Activated CD4-positive, alpha-beta memory T cell treated with anti-CD3 and anti-CD28 coated beads for 36 hours (primary cell): ENCODE measurements at regions of chr15 and their contacts with region 1.

Region 1: GRCh38 chr15:43510200-43511011 is 7.0 kb upstream of the MAP1A start:
- DNase-seq: peak; percentile 98
- H3K4me3 Mint-ChIP-seq: peak overlapping the region; percentile 86
- H3K27ac Mint-ChIP-seq: peak overlapping the region; percentile 85
- H3K4me1 Mint-ChIP-seq: peaks cover 35% of the 10 kb centered on the region
- H3K27me3 Mint-ChIP-seq: no peaks in the 10 kb centered on the region

Region 2: DNA sequence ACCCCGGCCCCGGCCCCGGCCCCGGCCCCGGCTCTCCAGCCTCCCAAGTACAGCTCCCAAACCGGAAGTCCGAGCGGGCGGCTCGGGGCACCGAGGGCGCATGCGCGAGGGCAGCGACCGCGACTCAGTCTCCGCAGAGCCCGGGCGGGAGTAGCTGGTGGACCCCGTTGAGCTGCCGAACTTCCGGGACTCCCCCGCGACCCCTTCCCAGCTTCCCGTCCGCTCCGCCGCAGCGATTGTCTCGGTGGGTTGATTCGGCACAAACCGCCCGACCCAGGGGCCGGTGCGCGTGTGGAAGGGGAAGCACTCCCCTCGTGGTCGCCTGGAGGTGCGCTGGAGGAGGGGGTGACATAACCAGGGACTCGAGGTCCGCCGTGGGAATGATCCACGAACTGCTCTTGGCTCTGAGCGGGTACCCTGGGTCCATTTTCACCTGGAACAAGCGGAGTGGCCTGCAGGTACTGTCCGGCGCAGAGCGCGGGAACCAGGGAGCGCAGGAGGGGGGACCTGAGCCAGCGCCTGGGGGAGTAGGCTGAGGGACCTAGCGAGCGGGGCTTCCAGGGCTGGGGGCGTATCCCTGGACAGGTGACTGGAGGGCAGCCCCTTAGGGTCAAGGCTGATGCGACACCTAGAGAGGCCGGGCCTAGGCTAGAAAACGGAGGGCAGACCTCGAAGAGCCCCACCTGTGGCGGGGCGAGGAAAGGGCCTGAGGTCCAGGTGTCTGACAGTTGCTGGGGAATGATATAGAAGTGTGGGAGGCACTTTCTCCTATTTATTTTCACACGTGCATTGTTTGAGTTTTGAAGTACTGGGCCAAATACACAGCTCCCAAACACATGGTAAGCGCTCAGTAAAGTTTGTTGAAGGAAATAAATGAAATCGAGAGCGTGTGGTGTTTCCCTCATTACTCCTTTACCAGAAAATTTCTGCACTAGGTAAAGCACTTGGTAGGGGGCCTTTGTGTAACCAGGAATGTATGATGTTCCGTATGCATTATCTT is 139.1 kb before region 1 on chr15 and contains the starts of genes TUBGCP4 and ZSCAN29:
- CTCF ChIA-PET with region 1: interaction called, 9 read pairs
- POLR2A ChIA-PET with region 1: interaction called, 3 read pairs
- intact Hi-C with region 1: loop called (anchors 10 kb)
- DNase-seq: peak; percentile 86
- H3K4me3 Mint-ChIP-seq: peak within 1 kb of the TSS; percentile 90
- H3K27ac Mint-ChIP-seq: peak within 1 kb of the TSS; percentile 75
- H3K4me1 Mint-ChIP-seq: peaks cover 51% of the 10 kb centered on the region
- H3K27me3 Mint-ChIP-seq: no peaks in the 10 kb centered on the region
- total RNA-seq, gene TUBGCP4: 37.3 to 37.6 TPM
- total RNA-seq, gene ZSCAN29: 20.6 to 20.9 TPM

Region 3: GRCh38 chr15:43440721-43441281 is 69.6 kb before region 1 on chr15:
- CTCF ChIA-PET with region 1: interaction called, 54 read pairs
- POLR2A ChIA-PET with region 1: interaction called, 17 read pairs
- intact Hi-C with region 1: loop called (anchors 1 kb)
- DNase-seq: peak; percentile 61
- H3K4me3 Mint-ChIP-seq: peak overlapping the region; percentile 36
- H3K27ac Mint-ChIP-seq: peak overlapping the region; percentile 87
- H3K4me1 Mint-ChIP-seq: peaks cover 11% of the 10 kb centered on the region
- H3K27me3 Mint-ChIP-seq: no peaks in the 10 kb centered on the region

Region 4: DNA sequence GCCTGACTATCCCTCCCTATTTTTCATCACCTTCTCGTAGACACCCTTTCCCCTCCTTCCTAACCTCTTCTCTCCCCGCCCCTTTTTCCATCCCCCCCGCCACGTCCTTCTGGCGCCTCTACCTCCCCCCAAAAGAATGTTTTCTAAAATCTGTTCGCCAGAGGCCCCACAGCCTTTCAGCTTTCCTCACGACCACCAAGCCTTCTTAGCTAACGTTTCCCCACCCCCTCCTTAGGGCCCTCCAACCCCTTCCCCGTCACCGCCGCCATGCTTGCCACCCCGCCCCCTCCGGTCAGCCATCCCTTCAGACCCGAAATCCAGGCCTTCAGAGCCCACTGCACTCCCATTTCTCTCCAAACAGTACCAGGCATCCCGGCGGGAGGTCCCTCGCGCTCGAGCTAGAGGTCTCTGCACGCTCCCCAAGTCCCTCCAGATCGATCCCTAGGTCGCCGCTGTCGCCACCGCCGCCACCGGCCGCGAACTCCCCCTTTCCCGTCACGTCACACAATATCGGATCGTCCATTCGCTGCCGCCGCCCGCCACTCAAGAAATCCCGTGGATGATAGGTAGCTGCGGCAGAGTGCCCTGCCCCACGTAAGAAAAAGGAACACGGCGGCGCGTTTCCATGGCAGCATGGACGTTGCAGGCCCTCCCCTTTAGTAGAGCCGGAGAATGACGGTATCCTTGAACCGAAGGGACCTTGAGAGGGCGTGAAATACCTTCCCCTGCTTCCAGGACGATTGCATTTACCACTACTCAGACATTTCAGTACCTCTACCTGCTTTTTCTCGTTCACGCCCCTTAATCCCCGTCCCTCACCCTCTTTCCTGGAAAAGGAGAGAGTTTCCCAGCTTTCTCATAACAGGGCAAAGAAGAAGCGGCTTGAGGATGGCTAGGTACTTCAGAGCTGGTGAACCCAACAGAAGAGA is 17.5 kb before region 1 on chr15 and contains the start of gene TP53BP1:
- CTCF ChIA-PET with region 1: interaction called, 23 read pairs
- POLR2A ChIA-PET with region 1: interaction called, 22 read pairs
- intact Hi-C with region 1: loop called (anchors 1 kb)
- DNase-seq: peak; percentile 97
- H3K4me3 Mint-ChIP-seq: peak within 1 kb of the TSS; percentile 87
- H3K27ac Mint-ChIP-seq: peak within 1 kb of the TSS; percentile 88
- H3K4me1 Mint-ChIP-seq: peaks cover 25% of the 10 kb centered on the region
- H3K27me3 Mint-ChIP-seq: no peaks in the 10 kb centered on the region
- total RNA-seq, gene TP53BP1: 26.4 to 32.0 TPM

Region 5: DNA sequence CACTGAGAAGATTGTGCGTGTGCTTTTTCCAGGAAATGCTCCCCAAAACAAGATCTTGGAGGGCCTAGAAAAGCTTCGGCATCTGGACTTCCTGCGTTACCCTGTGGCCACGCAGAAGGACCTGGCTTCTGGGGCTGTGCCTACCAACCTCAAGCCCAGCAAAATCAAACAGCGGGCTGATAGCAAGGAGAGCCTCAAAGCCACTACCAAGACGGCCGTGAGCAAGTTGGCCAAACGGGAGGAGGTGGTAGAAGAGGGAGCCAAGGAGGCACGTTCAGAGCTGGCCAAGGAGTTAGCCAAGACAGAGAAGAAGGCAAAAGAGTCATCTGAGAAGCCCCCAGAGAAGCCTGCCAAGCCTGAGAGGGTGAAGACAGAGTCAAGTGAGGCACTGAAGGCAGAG is 11.8 kb after region 1 on chr15:
- CTCF ChIA-PET with region 1: interaction called, 11 read pairs
- POLR2A ChIA-PET with region 1: no interaction called
- intact Hi-C with region 1: no loop called
- DNase-seq: no peak
- H3K4me3 Mint-ChIP-seq: no peak overlapping the region
- H3K27ac Mint-ChIP-seq: no peak overlapping the region
- H3K4me1 Mint-ChIP-seq: peaks cover 8% of the 10 kb centered on the region
- H3K27me3 Mint-ChIP-seq: peaks cover 11% of the 10 kb centered on the region